GM10248 (cell line): ENCODE measurements at regions of chr10 and their contacts with region 1.

Region 1: GRCh38 chr10:59625721-59626522 is 83.7 kb downstream of the SLC16A9 start:
- DNase-seq: peak; percentile 68
- CTCF ChIP-seq: peak; percentile 85

Region 2: GRCh38 chr10:58952747-58953466 is 673.0 kb before region 1 on chr10:
- CTCF ChIA-PET with region 1: interaction called, 10 read pairs
- POLR2A ChIA-PET with region 1: no interaction called
- DNase-seq: peak; percentile 16
- CTCF ChIP-seq: peak; percentile 78

Region 3: GRCh38 chr10:59646150-59646549 is 20.2 kb after region 1 on chr10:
- CTCF ChIA-PET with region 1: interaction called, 10 read pairs
- POLR2A ChIA-PET with region 1: no interaction called
- DNase-seq: no peak
- CTCF ChIP-seq: no peak

Region 4: GRCh38 chr10:59817773-59818172 is 191.9 kb after region 1 on chr10:
- CTCF ChIA-PET with region 1: interaction called, 16 read pairs
- POLR2A ChIA-PET with region 1: no interaction called
- DNase-seq: no peak
- CTCF ChIP-seq: no peak

Region 5: DNA sequence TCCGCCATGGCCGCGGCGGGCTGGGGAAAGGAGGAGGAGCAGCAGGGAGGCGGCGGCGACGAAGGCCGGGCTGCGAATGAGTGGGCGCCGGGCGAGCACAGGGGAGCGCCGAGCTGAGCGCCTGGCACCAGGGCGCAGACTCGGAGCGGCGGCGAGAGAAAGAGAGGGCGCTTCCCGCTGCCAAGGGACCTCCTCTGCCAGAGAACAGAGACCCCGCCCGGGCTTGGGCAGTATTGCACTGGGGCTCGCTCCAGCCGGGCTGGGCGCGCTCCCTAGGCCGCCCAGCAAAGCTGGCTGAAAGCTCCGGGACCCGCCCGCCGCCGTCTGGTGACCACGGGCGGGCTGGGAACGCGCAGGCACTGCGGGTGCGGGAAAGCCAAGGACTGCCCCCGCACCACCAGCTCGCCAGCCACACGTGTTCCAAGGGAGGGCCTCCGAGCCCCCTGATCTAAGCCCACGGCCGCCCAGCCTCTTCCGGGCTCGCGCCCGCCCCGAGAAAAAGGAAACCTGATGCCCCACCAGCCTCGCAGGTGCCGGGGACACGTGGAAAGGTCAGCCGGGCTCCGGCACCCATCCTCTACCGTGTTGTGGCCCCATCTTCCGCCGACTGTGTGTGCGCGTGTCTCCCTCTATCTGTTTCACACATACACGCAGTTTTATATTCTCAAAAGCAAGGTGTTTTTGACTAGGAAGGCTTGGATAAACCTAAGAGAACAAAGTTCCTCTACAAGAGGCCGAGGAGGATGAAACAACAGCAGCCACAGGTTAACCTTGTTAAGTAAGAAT is 280.7 kb after region 1 on chr10 and contains the start of gene CCDC6:
- CTCF ChIA-PET with region 1: interaction called, 20 read pairs
- POLR2A ChIA-PET with region 1: no interaction called
- DNase-seq: peak; percentile 87
- CTCF ChIP-seq: peak; percentile 71

Region 6: DNA sequence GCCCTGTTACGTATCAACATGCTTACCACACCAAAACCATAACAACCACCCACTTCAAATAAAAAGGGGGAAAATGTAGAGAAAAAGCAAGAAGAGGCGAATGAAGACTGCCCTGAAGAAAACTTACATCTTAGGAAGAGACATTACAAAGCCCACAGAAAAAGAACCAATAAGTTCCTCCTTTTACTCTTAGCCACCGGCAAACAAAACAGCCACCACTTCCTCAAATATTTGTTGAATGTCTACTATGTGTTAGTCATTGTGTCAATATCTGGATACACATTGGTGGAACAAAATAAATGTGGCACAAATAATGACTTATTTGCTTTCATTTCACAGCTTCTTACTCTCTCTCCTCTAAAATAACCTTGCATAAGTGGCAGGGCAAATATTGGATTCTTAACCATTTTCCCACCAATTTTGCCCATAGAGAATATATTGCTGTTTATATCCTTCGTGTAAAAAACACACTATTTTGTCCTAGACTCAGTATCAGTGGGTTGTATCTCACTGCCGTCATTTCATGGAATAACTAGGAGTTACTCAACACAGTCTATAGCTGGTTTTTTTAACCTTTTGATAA is 656.9 kb after region 1 on chr10:
- CTCF ChIA-PET with region 1: no interaction called
- POLR2A ChIA-PET with region 1: no interaction called
- DNase-seq: no peak
- CTCF ChIP-seq: no peak